MCF 10A (cell line): ENCODE measurements at regions of chr6 and their contacts with region 1.

Region 1: DNA sequence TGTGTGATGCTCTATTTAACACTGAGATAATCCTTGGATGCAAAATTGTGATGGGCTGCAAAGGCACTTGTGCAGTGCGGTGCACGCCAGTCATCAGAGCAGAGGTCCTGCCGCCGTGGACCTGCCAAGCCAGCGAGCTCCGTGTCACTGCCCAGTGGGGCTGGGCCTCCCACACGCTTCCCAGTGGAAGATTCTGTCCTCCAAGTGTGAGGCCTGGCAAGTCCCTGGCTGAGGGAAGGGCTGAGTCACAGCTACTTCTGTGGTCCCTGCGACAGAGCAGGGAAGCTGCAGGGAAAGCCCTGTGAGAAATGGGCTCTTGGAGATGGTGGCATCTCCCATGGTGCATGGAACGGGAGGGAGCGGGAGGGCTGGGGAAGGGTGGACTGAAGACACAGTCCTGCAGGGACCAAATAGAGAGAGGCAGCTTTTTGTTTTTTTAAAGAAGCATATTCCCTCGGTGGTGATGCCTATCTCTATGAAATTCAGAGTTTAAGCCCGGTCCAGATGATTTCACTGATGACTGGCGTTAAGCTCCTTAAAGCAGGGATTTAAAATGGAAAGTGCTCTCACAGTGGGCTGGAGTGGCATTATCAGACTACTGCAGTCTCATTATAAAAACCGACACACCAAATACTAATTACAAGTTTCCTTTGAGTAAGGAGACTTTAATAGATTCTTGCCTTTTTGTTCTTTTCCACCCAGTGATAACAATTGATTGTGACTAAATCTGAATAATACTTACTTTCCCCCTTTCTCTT is 413.7 kb downstream of the QKI start:
- DNase-seq: no peak
- H3K4me3 Mint-ChIP-seq: no peak overlapping the region
- H3K27ac Mint-ChIP-seq: no peak overlapping the region
- H3K4me1 Mint-ChIP-seq: peaks cover 17% of the 10 kb centered on the region
- H3K27me3 Mint-ChIP-seq: no peaks in the 10 kb centered on the region
- CTCF ChIP-seq: no peak

Region 2: DNA sequence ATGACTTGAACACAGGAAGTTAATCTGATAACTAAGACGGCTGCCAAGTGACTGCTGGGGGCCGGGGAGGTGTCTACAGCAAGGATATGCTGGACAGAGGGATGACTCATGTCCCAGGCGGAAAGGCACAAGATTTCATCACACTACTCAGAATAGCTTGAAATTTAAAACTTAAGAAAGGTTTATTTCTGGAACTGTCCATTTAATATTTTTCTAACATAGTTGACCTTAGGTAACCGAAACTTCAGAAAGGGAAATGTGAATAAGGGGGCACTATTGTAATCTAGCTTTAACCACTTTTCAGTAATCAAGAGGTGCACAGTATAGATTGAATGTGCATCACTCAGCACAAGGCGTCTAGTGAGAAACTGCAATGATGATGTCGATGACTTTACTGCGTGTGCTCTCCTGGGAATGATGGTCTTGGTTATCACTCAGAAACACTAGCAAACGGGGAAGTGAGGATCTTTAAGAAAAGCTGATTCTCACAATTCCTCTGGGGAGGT is 242.2 kb before region 1 on chr6:
- CTCF ChIA-PET with region 1: interaction called, 4 read pairs
- POLR2A ChIA-PET with region 1: no interaction called
- intact Hi-C with region 1: loop called (anchors 10 kb)
- DNase-seq: peak; percentile 90
- H3K4me3 Mint-ChIP-seq: peak overlapping the region; percentile 41
- H3K27ac Mint-ChIP-seq: peak overlapping the region; percentile 83
- H3K4me1 Mint-ChIP-seq: peaks cover 32% of the 10 kb centered on the region
- H3K27me3 Mint-ChIP-seq: no peaks in the 10 kb centered on the region
- CTCF ChIP-seq: no peak

Region 3: GRCh38 chr6:163814494-163815364 is 13.5 kb before region 1 on chr6:
- CTCF ChIA-PET with region 1: interaction called, 12 read pairs
- POLR2A ChIA-PET with region 1: no interaction called
- intact Hi-C with region 1: no loop called
- DNase-seq: peak; percentile 91
- H3K4me3 Mint-ChIP-seq: no peak overlapping the region
- H3K27ac Mint-ChIP-seq: peak overlapping the region; percentile 10
- H3K4me1 Mint-ChIP-seq: peaks cover 15% of the 10 kb centered on the region
- H3K27me3 Mint-ChIP-seq: no peaks in the 10 kb centered on the region
- CTCF ChIP-seq: no peak